ENCODE measurements at regions of chr11 and their contacts with region 1.

Region 1: DNA sequence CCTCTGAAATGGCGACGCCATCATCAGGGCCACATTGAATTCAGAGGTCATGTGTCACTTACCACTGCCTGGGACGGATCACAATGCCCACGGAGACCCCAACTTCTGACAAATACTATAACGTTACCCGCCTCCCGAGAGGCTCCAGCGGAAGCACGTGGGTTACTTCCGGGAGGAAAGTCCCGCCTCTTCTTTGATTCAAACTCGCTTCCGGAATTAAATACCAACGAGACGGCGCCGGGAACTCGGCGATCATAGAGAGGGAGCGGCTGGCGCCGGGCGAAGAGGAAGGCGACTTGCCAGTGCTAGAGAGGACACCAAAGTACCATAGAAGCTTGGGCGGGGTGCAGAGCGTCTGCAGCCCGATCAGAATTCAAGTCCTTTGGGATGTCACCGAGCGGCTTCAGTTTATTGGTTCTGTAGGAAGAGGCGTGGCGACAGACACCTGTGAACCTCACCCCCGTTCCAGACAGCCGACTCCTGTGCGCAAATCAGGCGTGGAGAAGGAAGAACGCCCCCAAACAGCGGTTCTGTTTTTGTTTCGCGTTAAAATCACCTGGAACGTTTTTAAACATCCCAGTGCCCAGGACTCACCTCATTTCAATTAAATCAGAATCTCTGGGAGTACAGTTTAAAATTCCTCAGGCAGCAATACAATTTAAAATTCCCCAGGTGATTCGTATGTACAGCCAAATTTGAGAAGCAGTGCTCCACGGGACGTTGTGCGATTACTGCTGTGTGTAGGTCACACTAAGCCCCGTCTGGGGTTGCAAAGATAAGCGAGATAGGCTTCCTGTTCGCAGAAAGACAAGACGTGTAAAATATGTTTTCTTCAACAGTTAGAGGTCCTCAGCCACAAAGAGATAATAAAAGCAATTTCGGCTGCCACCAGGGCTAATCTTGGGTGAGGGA is at the start of gene TIMM10:
- DNase-seq: peak; percentile 86 to 98 (median 87)
- ATAC-seq: peak; percentile 94
- H3K4me3 ChIP-seq: peak within 1 kb of the TSS; percentile 82
- H3K27ac ChIP-seq: peak within 1 kb of the TSS; percentile 90
- H3K4me1 ChIP-seq: peaks cover 9 to 34% of the 10 kb centered on the region in 2 experiments; a peak in 4 of 5 replicates
- H3K27me3 ChIP-seq: no peaks in the 10 kb centered on the region
- CTCF ChIP-seq: peak in 2 of 3 experiments; percentile 13 to 39; a peak in 2 of 6 replicates
- EP300 ChIP-seq: peak; percentile 94
- POLR2A ChIP-seq: peak; percentile 80
- RAD21 ChIP-seq: peak; percentile 19 to 50; a peak in 3 of 4 replicates
- polyA plus RNA-seq, gene TIMM10: 493 to 553 TPM

Region 2: DNA sequence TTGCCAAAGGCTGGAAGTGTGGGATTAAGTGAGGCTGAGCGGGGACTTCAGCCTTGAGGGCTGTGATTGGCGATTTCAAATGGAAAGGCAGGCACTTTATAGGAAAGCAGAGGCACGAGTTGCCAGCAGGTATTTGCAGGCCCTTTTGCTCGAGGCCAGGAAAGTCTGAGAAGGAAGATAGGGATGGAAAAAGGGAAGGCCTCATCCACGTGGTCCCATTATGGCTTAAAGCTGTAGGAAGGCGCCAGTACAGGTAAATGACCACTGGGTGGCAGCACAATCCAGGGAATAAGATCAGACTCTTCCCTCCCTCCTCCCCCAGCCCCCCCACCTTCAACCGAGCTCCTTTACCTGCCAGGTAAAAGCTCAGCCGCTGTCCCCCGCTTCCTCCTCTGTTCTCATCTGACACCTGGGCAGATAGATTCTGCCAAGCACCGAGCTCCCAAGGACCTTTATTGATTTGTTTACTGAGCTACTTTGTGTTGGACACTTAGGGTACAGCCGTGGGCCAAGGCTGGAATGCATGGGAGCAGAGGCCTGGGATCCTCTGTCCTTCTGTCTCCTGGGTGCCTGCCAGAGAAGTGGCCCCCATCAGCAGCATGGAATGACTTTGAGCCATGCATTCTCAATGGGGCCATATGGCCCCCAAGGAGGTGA is 185.2 kb before region 1 on chr11:
- CTCF ChIA-PET with region 1: interaction called, 7 read pairs
- POLR2A ChIA-PET with region 1: no interaction called
- in situ Hi-C with region 1: loop called (anchors 10 kb)
- intact Hi-C with region 1: loop called (anchors 1 kb)
- DNase-seq: peak; percentile 78 to 87 (median 84)
- ATAC-seq: peak; percentile 82
- H3K4me3 ChIP-seq: no peak overlapping the region
- H3K27ac ChIP-seq: no peak overlapping the region
- H3K4me1 ChIP-seq: peaks cover 6 to 16% of the 10 kb centered on the region in 2 experiments; a peak in 4 of 5 replicates
- H3K27me3 ChIP-seq: no peaks in the 10 kb centered on the region; a peak in 1 of 5 replicates
- CTCF ChIP-seq: peak; percentile 68 to 79 (median 70)
- EP300 ChIP-seq: no peak
- POLR2A ChIP-seq: no peak
- RAD21 ChIP-seq: peak; percentile 62

Region 3: DNA sequence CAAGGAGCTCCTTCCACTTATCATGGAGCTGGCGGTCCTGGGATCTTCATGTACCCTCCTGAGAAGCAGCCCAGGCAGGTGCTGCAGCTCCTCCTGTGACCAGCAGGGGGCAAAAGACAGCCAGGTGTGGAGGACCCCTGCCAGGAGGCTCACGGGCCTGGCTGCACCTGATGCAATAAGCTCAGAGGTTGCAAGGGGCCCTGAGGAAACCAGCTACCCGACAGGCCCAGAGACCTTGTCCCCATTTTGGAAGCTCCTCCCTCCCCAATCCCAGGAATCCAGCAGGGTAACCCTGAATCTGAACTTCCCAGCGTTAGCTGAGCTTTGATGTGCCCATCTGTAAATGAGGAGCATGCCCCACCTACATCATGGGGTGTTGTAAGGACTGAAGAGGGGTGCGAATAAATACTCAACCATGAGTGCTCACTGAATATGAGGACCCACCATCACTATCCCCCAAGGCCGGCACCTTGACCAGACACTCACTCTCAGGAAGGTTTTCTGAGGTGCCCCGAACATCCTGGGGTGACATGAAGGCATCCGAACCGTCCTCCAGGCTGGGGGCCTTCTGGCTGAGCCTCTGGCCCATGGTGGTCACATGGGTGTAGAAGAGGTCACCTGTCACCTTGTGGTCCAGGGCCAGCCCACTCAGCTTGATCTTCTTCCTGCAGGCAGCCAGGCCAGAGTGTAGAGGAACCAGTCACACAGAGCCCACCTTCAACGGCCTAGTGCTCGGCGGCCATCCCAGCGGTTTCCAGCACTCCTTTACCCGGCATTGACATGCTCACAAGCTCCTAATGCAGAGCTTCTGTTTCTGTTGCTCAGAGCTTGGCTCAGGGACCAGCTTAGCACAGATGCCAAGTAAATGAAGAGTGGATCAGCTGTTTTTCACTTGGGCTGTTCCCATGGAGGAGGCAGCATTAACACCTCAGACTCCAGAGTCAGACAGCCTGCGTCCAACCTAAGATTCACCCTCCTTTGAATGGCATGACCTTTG is 37.0 kb before region 1 on chr11:
- CTCF ChIA-PET with region 1: interaction called, 51 read pairs
- POLR2A ChIA-PET with region 1: interaction called, 4 read pairs
- in situ Hi-C with region 1: loop called (anchors 5 kb)
- intact Hi-C with region 1: loop called (anchors 1 kb)
- DNase-seq: peak; percentile 68 to 78 (median 72)
- ATAC-seq: peak; percentile 89
- H3K4me3 ChIP-seq: no peak overlapping the region
- H3K27ac ChIP-seq: peak overlapping the region; percentile 67
- H3K4me1 ChIP-seq: peaks cover 1 to 7% of the 10 kb centered on the region in 2 experiments; a peak in 3 of 5 replicates
- H3K27me3 ChIP-seq: no peaks in the 10 kb centered on the region
- CTCF ChIP-seq: peak; percentile 78 to 98 (median 80)
- EP300 ChIP-seq: peak; percentile 74
- POLR2A ChIP-seq: no peak
- RAD21 ChIP-seq: peak; percentile 70 to 86

Region 4: GRCh38 chr11:57515332-57516060 is 15.4 kb before region 1 on chr11 and contains the start of gene SLC43A1:
- CTCF ChIA-PET with region 1: no interaction called
- POLR2A ChIA-PET with region 1: interaction called, 31 read pairs
- in situ Hi-C with region 1: no loop called
- intact Hi-C with region 1: no loop called
- DNase-seq: peak; percentile 81 to 85 (median 83)
- ATAC-seq: peak; percentile 82
- H3K4me3 ChIP-seq: peak within 1 kb of the TSS; percentile 88
- H3K27ac ChIP-seq: peak within 1 kb of the TSS; percentile 86
- H3K4me1 ChIP-seq: peaks cover 21 to 31% of the 10 kb centered on the region in 2 experiments; a peak in 4 of 5 replicates
- H3K27me3 ChIP-seq: no peaks in the 10 kb centered on the region
- CTCF ChIP-seq: 0 out of 6 replicates have a peak, but pooled peaks of 1 of the 3 experiments have one; percentile 5
- EP300 ChIP-seq: no peak
- POLR2A ChIP-seq: peak; percentile 77
- RAD21 ChIP-seq: no peak; a peak in 1 of 4 replicates
- polyA plus RNA-seq, gene SLC43A1: 2.6 to 3.8 TPM

Region 5: GRCh38 chr11:57562596-57562995 is 31.7 kb after region 1 on chr11:
- CTCF ChIA-PET with region 1: interaction called, 4 read pairs
- POLR2A ChIA-PET with region 1: no interaction called
- in situ Hi-C with region 1: no loop called
- intact Hi-C with region 1: loop called (anchors 1 kb)
- DNase-seq: peak in 1 of 4 experiments; percentile 37
- ATAC-seq: peak; percentile 74
- H3K4me3 ChIP-seq: no peak overlapping the region
- H3K27ac ChIP-seq: no peak overlapping the region
- H3K4me1 ChIP-seq: peaks cover 10 to 11% of the 10 kb centered on the region in 2 experiments; a peak in 4 of 5 replicates
- H3K27me3 ChIP-seq: no peaks in the 10 kb centered on the region; a peak in 1 of 5 replicates
- CTCF ChIP-seq: peak; percentile 28 to 54 (median 51); a peak in 4 of 6 replicates
- EP300 ChIP-seq: no peak
- POLR2A ChIP-seq: no peak
- RAD21 ChIP-seq: peak in 1 of 2 experiments; percentile 72; a peak in 3 of 4 replicates

Region 6: DNA sequence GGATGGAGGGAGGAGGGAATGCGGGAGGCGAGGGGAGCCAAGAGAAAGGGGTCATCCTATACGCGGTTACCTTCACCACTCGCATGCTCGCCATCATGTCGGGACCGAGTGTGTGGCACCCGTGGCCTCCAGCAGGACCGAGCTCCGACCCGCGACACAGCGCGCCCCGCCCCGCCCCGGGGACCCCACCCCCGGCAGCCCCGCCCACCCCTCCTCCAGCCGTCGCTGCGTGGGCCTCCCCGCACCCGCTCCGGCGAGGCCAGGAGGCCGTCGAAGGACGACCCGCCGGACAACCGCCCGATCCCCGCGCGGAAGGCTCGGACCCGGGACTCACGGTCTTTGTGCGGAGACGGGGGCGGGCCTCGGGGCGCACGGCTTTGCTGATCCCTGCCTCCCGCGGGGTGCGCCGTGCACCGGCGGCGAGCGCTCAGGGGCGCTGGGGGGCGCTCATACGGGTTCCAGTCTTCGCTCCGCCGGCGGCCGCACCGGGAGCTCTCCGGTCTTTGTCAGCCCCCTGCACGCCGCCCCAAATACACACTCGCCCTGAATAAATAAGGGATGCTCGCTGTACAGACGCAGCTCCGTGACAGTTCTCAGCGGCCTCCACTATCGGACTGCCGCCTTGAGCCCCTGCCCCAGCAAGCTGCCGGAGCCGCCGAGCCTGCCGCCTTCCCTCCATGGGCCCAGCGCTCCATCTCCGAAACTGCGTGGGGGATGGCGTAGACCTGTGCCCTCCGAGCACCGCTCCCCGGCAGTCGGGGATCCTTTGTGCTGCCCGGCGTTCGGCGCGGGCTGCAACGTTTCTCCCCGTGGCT is 36.9 kb after region 1 on chr11 and contains the start of gene UBE2L6:
- CTCF ChIA-PET with region 1: interaction called, 4 read pairs
- POLR2A ChIA-PET with region 1: no interaction called
- in situ Hi-C with region 1: no loop called
- intact Hi-C with region 1: loop called (anchors 1 kb)
- DNase-seq: peak; percentile 69 to 85 (median 82)
- ATAC-seq: peak; percentile 91
- H3K4me3 ChIP-seq: peak within 1 kb of the TSS; percentile 78
- H3K27ac ChIP-seq: peak within 1 kb of the TSS; percentile 60; the same call in 2 of the 3 replicates
- H3K4me1 ChIP-seq: peaks cover 12 to 19% of the 10 kb centered on the region in 2 experiments; a peak in 4 of 5 replicates
- H3K27me3 ChIP-seq: no peaks in the 10 kb centered on the region
- CTCF ChIP-seq: peak in 2 of 3 experiments; percentile 45 to 59; a peak in 4 of 6 replicates
- EP300 ChIP-seq: no peak
- POLR2A ChIP-seq: no peak
- RAD21 ChIP-seq: peak in 1 of 2 experiments; percentile 81; a peak in 2 of 4 replicates
- polyA plus RNA-seq, gene UBE2L6: 21.5 to 24.9 TPM

Region 7: DNA sequence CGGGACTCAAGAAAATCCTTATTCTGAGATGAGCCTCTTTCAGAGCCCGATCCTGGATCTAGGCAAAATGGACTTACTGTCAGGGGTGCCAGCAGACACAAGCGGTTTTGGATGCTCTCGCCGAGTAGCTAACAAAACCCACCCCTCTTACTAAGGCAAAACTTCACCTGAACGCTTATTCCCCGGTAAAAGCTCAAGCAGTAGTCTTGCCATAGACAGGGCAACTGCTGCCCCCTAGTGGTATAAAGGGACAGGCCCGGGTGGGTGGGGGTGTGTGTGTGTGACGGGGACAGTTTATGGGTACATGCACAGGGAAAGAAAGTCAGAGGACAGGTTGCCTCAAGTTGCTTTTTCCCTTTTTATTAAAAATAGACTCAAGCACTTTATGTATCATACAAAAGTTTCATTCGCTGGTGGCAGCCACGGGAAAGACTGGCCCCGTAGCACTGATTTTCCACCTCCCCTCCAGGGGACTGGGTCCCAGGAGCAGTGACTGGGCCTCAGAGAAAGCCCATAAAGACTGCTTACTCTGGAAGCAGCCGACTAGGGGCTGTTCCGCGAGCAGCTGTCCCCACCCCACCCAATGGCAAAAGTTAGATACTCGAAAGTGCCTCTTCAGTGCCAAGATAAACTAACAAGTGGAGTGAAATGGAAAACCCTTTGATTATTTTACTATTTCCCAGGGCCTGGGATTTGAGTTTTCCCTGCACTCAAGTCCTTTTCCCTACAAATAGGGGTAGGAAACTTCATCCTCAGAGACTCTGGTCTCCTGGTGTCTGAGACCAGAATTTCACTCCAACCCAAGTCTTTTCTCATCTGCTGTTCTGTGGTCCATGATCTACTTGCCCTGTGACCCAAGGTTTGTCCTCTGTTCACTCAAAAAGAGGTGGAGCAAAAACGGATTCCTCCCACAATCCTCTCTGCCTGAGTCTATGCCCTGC is 114.2 kb after region 1 on chr11:
- CTCF ChIA-PET with region 1: interaction called, 5 read pairs
- POLR2A ChIA-PET with region 1: no interaction called
- in situ Hi-C with region 1: no loop called
- intact Hi-C with region 1: loop called (anchors 1 kb)
- DNase-seq: peak; percentile 83 to 87 (median 86)
- ATAC-seq: peak; percentile 84
- H3K4me3 ChIP-seq: no peak overlapping the region
- H3K27ac ChIP-seq: no peak overlapping the region
- H3K4me1 ChIP-seq: peaks cover 31 to 34% of the 10 kb centered on the region in 2 experiments
- H3K27me3 ChIP-seq: peaks cover 0 to 15% of the 10 kb centered on the region in 2 experiments; a peak in 2 of 5 replicates
- CTCF ChIP-seq: peak; percentile 80 to 85 (median 82)
- EP300 ChIP-seq: no peak
- POLR2A ChIP-seq: no peak
- RAD21 ChIP-seq: peak; percentile 62 to 70